GM12878 (cell line): ENCODE measurements at regions of chr1 and their contacts with region 1.

Region 1: DNA sequence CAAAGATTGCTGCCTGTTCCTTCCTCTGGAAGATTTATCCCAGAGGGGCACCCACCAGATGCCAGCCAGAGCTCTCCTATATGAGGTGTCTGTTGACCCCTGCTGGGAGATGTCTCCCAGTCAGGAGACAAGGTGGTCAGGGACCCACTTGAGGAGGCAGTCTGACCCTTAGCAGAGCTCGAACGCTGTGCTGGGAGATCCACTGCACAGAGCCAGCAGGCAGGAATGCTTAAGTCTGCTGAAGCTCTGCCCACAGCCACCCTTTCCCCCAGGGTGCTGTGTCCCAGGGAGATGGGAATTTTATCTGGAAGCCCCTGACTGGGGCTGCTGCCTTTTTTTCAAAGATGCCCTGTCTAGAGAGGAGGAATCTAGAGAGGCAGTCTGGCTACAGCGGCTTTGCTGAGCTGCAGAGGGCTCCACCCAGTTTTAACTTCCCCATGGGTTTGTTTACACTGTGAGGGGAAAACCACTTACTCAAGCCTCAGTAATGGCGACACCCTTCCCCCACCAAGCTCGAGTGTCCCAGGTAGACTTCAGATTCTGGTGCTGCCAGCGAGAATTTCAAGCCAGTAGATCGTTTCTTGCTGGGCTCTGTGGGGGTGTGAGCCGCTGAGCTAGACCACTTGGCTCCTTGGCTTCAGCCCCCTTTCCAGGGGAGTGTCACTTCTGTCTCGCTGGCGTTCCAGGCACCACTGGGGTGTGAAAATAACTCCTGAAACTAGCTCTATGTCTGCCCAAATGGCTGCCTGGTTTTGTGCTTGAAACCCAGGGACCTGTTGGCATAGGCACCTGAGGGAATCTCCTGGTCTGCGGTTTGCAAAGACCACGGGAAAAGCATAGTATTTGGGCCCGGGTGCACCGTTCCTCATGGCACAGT is 51.1 kb upstream of the PDC start:
- DNase-seq: no peak
- ATAC-seq: peak; percentile 98
- H3K4me3 ChIP-seq: no peak overlapping the region
- H3K27ac ChIP-seq: peak overlapping the region; percentile 55
- H3K4me1 ChIP-seq: peaks cover 13% of the 10 kb centered on the region
- H3K27me3 ChIP-seq: no peaks in the 10 kb centered on the region
- CTCF ChIP-seq: 0 out of 6 replicates have a peak, but pooled peaks of 1 of the 3 experiments have one; percentile 1
- EP300 ChIP-seq: no peak
- POLR2A ChIP-seq: no peak
- RAD21 ChIP-seq: no peak

Region 2: GRCh38 chr1:186178426-186179043 is 333.5 kb before region 1 on chr1:
- CTCF ChIA-PET with region 1: no interaction called
- POLR2A ChIA-PET with region 1: no interaction called
- RAD21 ChIA-PET with region 1: no interaction called
- SMC1A ChIA-PET with region 1: no interaction called
- in situ Hi-C with region 1: no loop called
- intact Hi-C with region 1: no loop called
- DNase-seq: no peak
- ATAC-seq: peak; percentile 85
- H3K4me3 ChIP-seq: no peak overlapping the region
- H3K27ac ChIP-seq: no peak overlapping the region
- H3K4me1 ChIP-seq: no peaks in the 10 kb centered on the region
- H3K27me3 ChIP-seq: no peaks in the 10 kb centered on the region
- CTCF ChIP-seq: no peak
- EP300 ChIP-seq: no peak
- POLR2A ChIP-seq: no peak
- RAD21 ChIP-seq: no peak

Region 3: GRCh38 chr1:186409091-186409490 is 102.9 kb before region 1 on chr1:
- CTCF ChIA-PET with region 1: no interaction called
- POLR2A ChIA-PET with region 1: no interaction called
- RAD21 ChIA-PET with region 1: no interaction called
- SMC1A ChIA-PET with region 1: no interaction called
- in situ Hi-C with region 1: no loop called
- intact Hi-C with region 1: no loop called
- DNase-seq: no peak
- ATAC-seq: peak; percentile 83
- H3K4me3 ChIP-seq: no peak overlapping the region
- H3K27ac ChIP-seq: no peak overlapping the region
- H3K4me1 ChIP-seq: no peaks in the 10 kb centered on the region
- H3K27me3 ChIP-seq: no peaks in the 10 kb centered on the region
- CTCF ChIP-seq: no peak
- EP300 ChIP-seq: no peak
- POLR2A ChIP-seq: no peak
- RAD21 ChIP-seq: no peak

Region 4: DNA sequence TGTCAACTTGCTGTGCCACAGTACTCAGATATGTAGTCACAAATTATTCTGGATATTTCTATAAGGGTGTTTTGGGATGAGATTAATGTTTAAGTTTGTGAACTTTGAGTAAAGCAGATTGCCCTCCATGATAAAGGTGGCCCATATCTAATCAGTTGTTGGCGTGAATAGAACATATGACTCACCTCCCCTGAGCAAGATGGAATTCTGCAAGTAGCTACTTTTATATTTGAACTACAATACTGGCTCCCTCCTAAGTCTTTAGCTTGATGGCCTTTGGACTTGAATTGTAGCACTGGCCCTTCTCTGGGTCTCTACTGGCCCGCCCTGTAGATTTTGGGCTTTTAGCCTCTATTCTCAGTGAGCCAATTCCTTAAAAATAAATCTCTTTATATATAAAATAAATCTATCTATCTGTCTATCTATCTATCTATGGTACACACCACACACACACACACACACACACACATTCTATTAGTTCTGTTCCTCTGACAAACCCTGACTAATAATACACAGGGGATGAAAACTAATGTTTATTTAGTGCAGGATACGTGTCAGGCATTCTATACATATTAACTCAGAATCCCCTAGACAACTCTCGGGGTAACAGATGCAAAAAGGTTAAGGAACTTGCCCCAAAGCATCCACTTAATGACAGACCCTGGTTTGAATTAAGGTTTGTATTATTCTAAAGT is 13.2 kb before region 1 on chr1:
- CTCF ChIA-PET with region 1: interaction called, 5 read pairs
- POLR2A ChIA-PET with region 1: interaction called, 3 read pairs
- RAD21 ChIA-PET with region 1: interaction called, 4 read pairs
- SMC1A ChIA-PET with region 1: interaction called, 11 read pairs
- in situ Hi-C with region 1: no loop called
- intact Hi-C with region 1: no loop called
- DNase-seq: no peak
- ATAC-seq: no peak
- H3K4me3 ChIP-seq: no peak overlapping the region
- H3K27ac ChIP-seq: no peak overlapping the region
- H3K4me1 ChIP-seq: peaks cover 4% of the 10 kb centered on the region; the same call in 1 of the 2 replicates
- H3K27me3 ChIP-seq: no peaks in the 10 kb centered on the region
- CTCF ChIP-seq: no peak
- EP300 ChIP-seq: no peak
- POLR2A ChIP-seq: no peak
- RAD21 ChIP-seq: no peak